GM10248 (cell line): ENCODE measurements at regions of chr1 and their contacts with region 1.

Region 1: GRCh38 chr1:244302889-244303613 is 148.7 kb downstream of the ADSS2 start:
- DNase-seq: no peak
- CTCF ChIP-seq: no peak

Region 2: DNA sequence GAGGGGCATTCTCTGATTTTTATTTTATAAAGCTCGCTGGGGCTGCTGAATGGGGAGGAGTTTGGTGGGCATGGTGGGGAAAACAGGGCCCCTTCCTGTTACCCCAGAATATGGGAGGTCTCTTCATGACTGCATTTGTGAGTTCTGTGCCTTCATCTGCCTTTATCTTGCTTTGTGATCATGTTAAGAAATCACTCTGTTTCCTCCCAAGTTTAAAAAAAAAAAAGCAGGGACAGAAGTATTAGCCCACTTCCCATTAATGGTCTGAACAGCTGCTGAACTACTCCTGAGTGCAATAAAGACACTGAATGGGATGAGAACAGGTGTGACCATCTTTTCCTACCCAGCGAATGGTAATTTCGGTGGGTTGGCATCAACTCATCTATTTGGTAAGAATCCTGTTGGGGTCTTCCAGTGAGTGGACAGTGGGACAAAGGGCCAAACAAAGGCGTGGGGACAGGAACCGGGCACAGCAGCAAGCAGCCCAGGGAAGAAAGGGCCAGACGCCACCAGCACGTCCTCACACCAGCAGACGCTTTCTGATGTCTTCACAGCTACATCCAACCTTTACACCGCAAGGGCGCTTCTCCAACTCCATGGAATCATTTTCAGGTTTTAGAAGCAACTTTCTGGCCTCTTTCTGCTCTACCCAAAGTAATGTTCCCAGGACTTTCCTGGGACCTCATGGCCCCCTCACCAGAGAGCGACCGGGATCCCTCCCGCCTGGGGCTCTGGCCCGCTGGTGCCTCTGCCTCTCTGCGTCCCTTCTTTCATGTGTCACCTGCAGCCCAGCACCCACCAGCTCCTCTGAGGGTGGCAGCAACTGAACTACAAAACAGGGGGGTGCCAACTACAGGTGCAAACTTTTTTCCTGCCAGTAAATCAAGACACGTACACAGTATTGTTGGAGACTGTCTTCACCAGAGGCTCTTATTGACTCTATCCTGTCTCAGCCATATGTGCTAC is 11.5 kb before region 1 on chr1:
- CTCF ChIA-PET with region 1: interaction called, 42 read pairs
- POLR2A ChIA-PET with region 1: no interaction called
- DNase-seq: no peak
- CTCF ChIP-seq: no peak

Region 3: GRCh38 chr1:244319283-244320132 is 16.5 kb after region 1 on chr1:
- CTCF ChIA-PET with region 1: interaction called, 12 read pairs
- POLR2A ChIA-PET with region 1: interaction called, 5 read pairs
- DNase-seq: peak; percentile 50
- CTCF ChIP-seq: no peak

Region 4: GRCh38 chr1:244350027-244350426 is 47.0 kb after region 1 on chr1:
- CTCF ChIA-PET with region 1: no interaction called
- POLR2A ChIA-PET with region 1: no interaction called
- DNase-seq: peak; percentile 48
- CTCF ChIP-seq: no peak